Caco-2 (cell line): ENCODE measurements at regions of chr20 and their contacts with region 1.

Region 1: GRCh38 chr20:44217342-44218092 is 6.9 kb upstream of the OSER1 start:
- DNase-seq: peak; percentile 92 to 95
- H3K4me3 ChIP-seq: no peak overlapping the region
- H3K4me3 Mint-ChIP-seq: no peak overlapping the region
- H3K27ac Mint-ChIP-seq: peak overlapping the region; percentile 8
- H3K4me1 ChIP-seq: peaks cover 49% of the 10 kb centered on the region
- H3K4me1 Mint-ChIP-seq: peaks cover 49% of the 10 kb centered on the region
- H3K27me3 ChIP-seq: no peaks in the 10 kb centered on the region
- H3K27me3 Mint-ChIP-seq: no peaks in the 10 kb centered on the region
- CTCF ChIP-seq: peak; percentile 100

Region 2: GRCh38 chr20:44187051-44187762 is 30.3 kb before region 1 on chr20 and contains the start of gene JPH2:
- CTCF ChIA-PET with region 1: interaction called, 12 read pairs
- POLR2A ChIA-PET with region 1: no interaction called
- intact Hi-C with region 1: no loop called
- DNase-seq: peak; percentile 82 to 87
- H3K4me3 ChIP-seq: peak within 1 kb of the TSS; percentile 38
- H3K4me3 Mint-ChIP-seq: peak within 1 kb of the TSS; percentile 74
- H3K27ac Mint-ChIP-seq: peak within 1 kb of the TSS; percentile 13
- H3K4me1 ChIP-seq: peaks cover 45% of the 10 kb centered on the region
- H3K4me1 Mint-ChIP-seq: peaks cover 27% of the 10 kb centered on the region
- H3K27me3 ChIP-seq: no peaks in the 10 kb centered on the region
- H3K27me3 Mint-ChIP-seq: no peaks in the 10 kb centered on the region
- CTCF ChIP-seq: no peak
- total RNA-seq, gene JPH2: 10.5 and 11.1 TPM in 2 replicates

Region 3: GRCh38 chr20:44355498-44356352 is 138.2 kb after region 1 on chr20 and contains the start of gene HNF4A:
- CTCF ChIA-PET with region 1: interaction called, 16 read pairs
- POLR2A ChIA-PET with region 1: no interaction called
- intact Hi-C with region 1: no loop called
- DNase-seq: peak; percentile 96 to 97
- H3K4me3 ChIP-seq: peak within 1 kb of the TSS; percentile 77
- H3K4me3 Mint-ChIP-seq: peak within 1 kb of the TSS; percentile 93
- H3K27ac Mint-ChIP-seq: peak within 1 kb of the TSS; percentile 98
- H3K4me1 ChIP-seq: peaks cover 48% of the 10 kb centered on the region
- H3K4me1 Mint-ChIP-seq: peaks cover 41% of the 10 kb centered on the region
- H3K27me3 ChIP-seq: no peaks in the 10 kb centered on the region
- H3K27me3 Mint-ChIP-seq: no peaks in the 10 kb centered on the region
- CTCF ChIP-seq: no peak
- total RNA-seq, gene HNF4A: 256 and 292 TPM in 2 replicates

Region 4: DNA sequence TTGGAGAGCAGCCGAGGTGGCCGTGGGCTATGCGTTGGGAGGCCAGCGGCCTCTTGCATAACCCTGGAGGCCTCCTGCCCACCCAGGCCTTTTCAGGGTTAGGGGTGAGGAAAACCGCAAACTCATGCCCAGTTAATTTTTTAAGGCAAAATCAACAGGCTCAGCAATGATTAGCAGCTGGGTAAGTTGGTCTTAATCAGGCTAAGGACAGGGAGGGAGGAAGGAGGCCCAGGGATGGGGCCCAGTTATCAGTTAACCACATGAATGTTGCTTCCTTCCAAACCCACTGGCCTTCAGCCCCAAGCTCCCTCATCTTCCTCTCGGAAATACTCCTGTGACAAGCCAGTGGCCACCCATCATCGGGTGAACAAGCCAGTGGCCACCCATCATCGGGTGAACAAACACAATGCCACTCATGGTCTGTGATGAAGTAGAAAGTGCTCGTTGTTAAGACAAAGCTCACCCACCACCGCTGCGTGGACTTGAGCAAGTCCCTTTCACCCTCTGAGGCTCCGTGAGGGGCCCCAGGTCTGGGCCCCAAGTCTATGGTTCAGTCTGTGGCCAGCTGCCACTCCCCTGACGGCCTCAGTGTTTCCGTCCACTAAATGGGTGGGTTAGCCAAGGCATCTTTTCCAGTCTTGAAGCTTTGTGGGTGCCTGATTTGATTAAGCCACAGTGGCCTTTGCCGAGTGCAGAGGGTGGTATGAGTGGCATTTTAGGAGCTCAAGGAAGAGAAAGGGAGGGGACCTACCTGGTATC is 177.4 kb after region 1 on chr20:
- CTCF ChIA-PET with region 1: interaction called, 19 read pairs
- POLR2A ChIA-PET with region 1: no interaction called
- intact Hi-C with region 1: no loop called
- DNase-seq: peak; percentile 97 to 98
- H3K4me3 ChIP-seq: peak overlapping the region; percentile 11
- H3K4me3 Mint-ChIP-seq: peak overlapping the region; percentile 47
- H3K27ac Mint-ChIP-seq: peak overlapping the region; percentile 78
- H3K4me1 ChIP-seq: peaks cover 79% of the 10 kb centered on the region
- H3K4me1 Mint-ChIP-seq: peaks cover 52% of the 10 kb centered on the region
- H3K27me3 ChIP-seq: no peaks in the 10 kb centered on the region
- H3K27me3 Mint-ChIP-seq: no peaks in the 10 kb centered on the region
- CTCF ChIP-seq: no peak

Region 5: DNA sequence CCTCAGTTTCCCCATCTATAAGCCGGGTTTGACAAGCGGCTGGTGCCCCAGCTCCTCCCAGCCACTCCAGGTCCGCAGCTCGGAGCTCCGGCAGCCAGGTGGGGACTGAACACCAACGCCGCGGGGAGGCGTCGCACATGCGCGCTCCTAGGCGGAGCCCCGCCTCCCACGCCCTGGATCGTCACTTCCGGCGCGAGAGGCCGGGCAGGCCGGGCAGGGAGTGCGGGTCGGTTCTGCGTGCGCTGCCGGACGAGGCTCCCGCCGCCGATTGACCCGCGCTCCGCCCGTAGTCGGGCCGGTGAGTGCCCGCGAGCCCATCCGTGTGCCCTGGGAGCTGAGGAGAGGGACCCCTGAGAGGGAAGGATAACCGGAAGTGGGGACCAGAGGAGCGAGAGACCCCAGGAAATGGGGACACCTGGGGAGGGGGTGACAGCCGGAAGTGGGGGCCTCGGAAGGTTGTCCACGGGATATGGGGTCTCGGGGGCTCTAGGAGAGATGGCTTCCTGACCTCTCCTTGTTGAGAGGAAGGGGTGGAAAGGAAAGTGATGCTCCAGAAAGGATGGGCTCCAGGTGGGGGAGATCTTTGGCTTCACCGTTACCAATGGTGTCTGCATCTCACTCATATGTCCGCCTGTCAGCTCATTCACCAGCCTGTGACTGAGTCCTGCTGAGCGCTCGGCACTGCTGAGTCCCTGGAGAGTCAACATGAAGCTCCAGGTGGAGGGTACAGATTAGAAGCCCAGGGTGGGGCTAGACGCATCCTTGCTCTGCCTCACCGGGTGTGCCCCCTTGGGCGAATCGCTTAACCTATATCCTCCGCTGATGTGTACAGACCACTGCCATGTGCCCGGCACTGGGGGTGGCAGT is 258.4 kb after region 1 on chr20 and contains the start of gene TTPAL:
- CTCF ChIA-PET with region 1: interaction called, 158 read pairs
- POLR2A ChIA-PET with region 1: interaction called, 8 read pairs
- intact Hi-C with region 1: loop called (anchors 1 kb)
- DNase-seq: peak; percentile 95 to 99
- H3K4me3 ChIP-seq: peak within 1 kb of the TSS; percentile 89
- H3K4me3 Mint-ChIP-seq: peak within 1 kb of the TSS; percentile 98
- H3K27ac Mint-ChIP-seq: peak within 1 kb of the TSS; percentile 96
- H3K4me1 ChIP-seq: peaks cover 19% of the 10 kb centered on the region
- H3K4me1 Mint-ChIP-seq: peaks cover 25% of the 10 kb centered on the region
- H3K27me3 ChIP-seq: no peaks in the 10 kb centered on the region
- H3K27me3 Mint-ChIP-seq: no peaks in the 10 kb centered on the region
- CTCF ChIP-seq: peak; percentile 28 to 78
- total RNA-seq, gene TTPAL: 53.9 and 54.6 TPM in 2 replicates

Region 6: GRCh38 chr20:44683263-44684046 is 465.9 kb after region 1 on chr20:
- CTCF ChIA-PET with region 1: interaction called, 10 read pairs
- POLR2A ChIA-PET with region 1: no interaction called
- intact Hi-C with region 1: no loop called
- DNase-seq: peak; percentile 91 to 94
- H3K4me3 ChIP-seq: no peak overlapping the region
- H3K4me3 Mint-ChIP-seq: peak overlapping the region; percentile 13
- H3K27ac Mint-ChIP-seq: peak overlapping the region; percentile 3
- H3K4me1 ChIP-seq: peaks cover 21% of the 10 kb centered on the region
- H3K4me1 Mint-ChIP-seq: peaks cover 28% of the 10 kb centered on the region
- H3K27me3 ChIP-seq: no peaks in the 10 kb centered on the region
- H3K27me3 Mint-ChIP-seq: no peaks in the 10 kb centered on the region
- CTCF ChIP-seq: peak; percentile 95 to 98